Endothelial cell of umbilical vein (primary cell): ENCODE measurements at regions of chr1 and their contacts with region 1.

Region 1: GRCh38 chr1:230066466-230067404 is at the start of gene GALNT2:
- DNase-seq: peak; percentile 79
- H3K4me3 ChIP-seq: peak within 1 kb of the TSS; percentile 42 to 71 (median 54)
- H3K27ac ChIP-seq: peak within 1 kb of the TSS; percentile 47
- H3K4me1 ChIP-seq: peaks cover 11% of the 10 kb centered on the region
- H3K27me3 ChIP-seq: peaks cover 0 to under 1% of the 10 kb centered on the region in 2 experiments
- CTCF ChIP-seq: no peak
- POLR2A ChIP-seq: peak; percentile 81
- total RNA-seq, gene GALNT2: 71.7 and 77.5 TPM in 2 replicates

Region 2: GRCh38 chr1:229661022-229661877 is 405.5 kb before region 1 on chr1:
- CTCF ChIA-PET with region 1: no interaction called
- POLR2A ChIA-PET with region 1: no interaction called
- dilution Hi-C with region 1: no loop called
- intact Hi-C with region 1: loop called (anchors 2 kb)
- DNase-seq: peak; percentile 61
- H3K4me3 ChIP-seq: no peak overlapping the region
- H3K27ac ChIP-seq: no peak overlapping the region
- H3K4me1 ChIP-seq: peaks cover 17% of the 10 kb centered on the region
- H3K27me3 ChIP-seq: no peaks in the 10 kb centered on the region
- CTCF ChIP-seq: peak; percentile 82 to 92
- POLR2A ChIP-seq: no peak

Region 3: DNA sequence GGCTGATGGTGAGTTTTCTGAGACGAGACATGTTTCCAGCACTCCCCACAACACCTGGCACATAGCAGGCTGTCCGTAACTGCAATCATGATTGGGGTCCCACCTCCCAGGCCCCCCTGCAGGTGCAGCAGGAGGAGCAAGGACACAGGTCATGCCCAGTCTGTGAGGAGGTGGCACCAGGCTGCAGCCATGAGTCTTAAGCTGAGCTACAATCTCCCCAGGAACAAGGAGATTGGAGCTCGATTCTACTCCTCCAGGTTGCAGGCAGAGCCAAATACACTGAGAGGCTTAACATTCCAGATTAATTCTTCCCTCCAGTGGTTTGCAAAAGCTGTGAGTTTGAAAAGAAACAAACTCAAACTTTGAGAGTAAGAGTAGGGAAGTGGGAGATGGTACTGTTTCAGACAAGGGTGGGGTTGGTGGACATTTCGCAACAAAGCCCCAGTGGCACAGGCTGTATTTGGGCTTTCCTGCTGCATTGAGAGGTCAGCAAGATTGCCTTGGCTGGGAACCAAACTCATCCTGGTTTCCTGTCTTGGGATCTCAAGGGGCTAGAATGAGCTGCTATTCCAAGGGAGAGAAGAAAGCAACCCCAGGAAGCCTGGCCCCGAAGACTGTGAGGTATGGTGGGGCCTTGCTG is 64.5 kb before region 1 on chr1:
- CTCF ChIA-PET with region 1: no interaction called
- POLR2A ChIA-PET with region 1: no interaction called
- dilution Hi-C with region 1: no loop called
- intact Hi-C with region 1: no loop called
- DNase-seq: no peak
- H3K4me3 ChIP-seq: no peak overlapping the region
- H3K27ac ChIP-seq: no peak overlapping the region
- H3K4me1 ChIP-seq: no peaks in the 10 kb centered on the region
- H3K27me3 ChIP-seq: peaks cover 0 to 5% of the 10 kb centered on the region in 2 experiments
- CTCF ChIP-seq: no peak
- POLR2A ChIP-seq: no peak

Region 4: GRCh38 chr1:230104395-230105244 is 37.9 kb after region 1 on chr1:
- CTCF ChIA-PET with region 1: interaction called, 4 read pairs
- POLR2A ChIA-PET with region 1: no interaction called
- dilution Hi-C with region 1: no loop called
- intact Hi-C with region 1: loop called (anchors 1 kb)
- DNase-seq: peak; percentile 96
- H3K4me3 ChIP-seq: peak overlapping the region in 1 of 3 experiments; percentile 3
- H3K27ac ChIP-seq: peak overlapping the region; percentile 76
- H3K4me1 ChIP-seq: peaks cover 25% of the 10 kb centered on the region
- H3K27me3 ChIP-seq: no peaks in the 10 kb centered on the region
- CTCF ChIP-seq: peak in 1 of 2 donors; percentile 18
- POLR2A ChIP-seq: peak; percentile 19

Region 5: DNA sequence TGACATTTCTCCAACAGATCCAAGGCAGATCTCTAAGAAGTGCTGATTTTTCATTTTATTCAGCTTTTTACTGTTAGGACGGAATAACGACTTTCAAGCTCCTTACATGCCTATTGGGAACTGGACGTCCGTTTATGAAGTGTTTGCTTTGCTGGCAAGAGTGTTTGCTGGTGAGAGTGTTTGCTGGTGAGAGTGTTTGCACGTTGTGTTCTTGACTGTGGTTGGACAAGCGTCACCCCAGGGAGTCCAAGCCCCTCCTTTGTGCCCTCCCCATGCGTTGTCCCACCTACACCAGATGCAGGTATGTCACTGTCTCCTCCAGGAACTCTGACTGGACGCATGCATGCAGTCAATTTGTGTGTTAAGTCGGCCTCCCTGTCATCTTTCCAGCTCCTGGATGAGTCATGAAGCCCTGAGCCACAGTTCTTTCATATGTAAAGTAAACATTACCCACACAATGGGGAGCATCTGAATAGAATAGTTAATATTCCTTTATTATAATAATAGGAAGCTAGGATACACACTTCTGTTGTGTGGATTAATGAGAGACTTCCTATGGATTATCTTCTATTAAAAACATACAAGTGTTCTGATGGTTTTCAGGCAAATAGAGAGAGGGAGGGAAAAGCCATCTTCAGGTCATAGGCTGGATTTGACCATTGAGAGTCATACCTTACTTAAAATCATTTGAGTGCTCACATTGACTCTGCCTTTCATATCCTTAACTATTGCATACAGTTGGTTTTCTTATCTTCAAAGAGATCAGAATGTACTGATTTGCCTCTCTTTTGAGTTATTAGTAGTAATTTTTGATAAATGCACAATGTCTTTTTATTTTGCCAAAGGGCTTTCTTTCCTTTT is 119.5 kb after region 1 on chr1:
- CTCF ChIA-PET with region 1: no interaction called
- POLR2A ChIA-PET with region 1: no interaction called
- dilution Hi-C with region 1: no loop called
- intact Hi-C with region 1: loop called (anchors 1 kb)
- DNase-seq: peak; percentile 92
- H3K4me3 ChIP-seq: no peak overlapping the region
- H3K27ac ChIP-seq: peak overlapping the region; percentile 10
- H3K4me1 ChIP-seq: peaks cover 25% of the 10 kb centered on the region
- H3K27me3 ChIP-seq: no peaks in the 10 kb centered on the region
- CTCF ChIP-seq: no peak
- POLR2A ChIP-seq: no peak

Region 6: GRCh38 chr1:230215031-230215430 is 148.3 kb after region 1 on chr1:
- CTCF ChIA-PET with region 1: interaction called, 10 read pairs
- POLR2A ChIA-PET with region 1: no interaction called
- dilution Hi-C with region 1: no loop called
- intact Hi-C with region 1: loop called (anchors 1 kb)
- DNase-seq: peak; percentile 92
- H3K4me3 ChIP-seq: no peak overlapping the region
- H3K27ac ChIP-seq: peak overlapping the region; percentile 33
- H3K4me1 ChIP-seq: peaks cover 27% of the 10 kb centered on the region
- H3K27me3 ChIP-seq: no peaks in the 10 kb centered on the region
- CTCF ChIP-seq: peak; percentile 70 to 87
- POLR2A ChIP-seq: no peak